ENCODE measurements at regions of chr16 and their contacts with region 1.

Region 1: DNA sequence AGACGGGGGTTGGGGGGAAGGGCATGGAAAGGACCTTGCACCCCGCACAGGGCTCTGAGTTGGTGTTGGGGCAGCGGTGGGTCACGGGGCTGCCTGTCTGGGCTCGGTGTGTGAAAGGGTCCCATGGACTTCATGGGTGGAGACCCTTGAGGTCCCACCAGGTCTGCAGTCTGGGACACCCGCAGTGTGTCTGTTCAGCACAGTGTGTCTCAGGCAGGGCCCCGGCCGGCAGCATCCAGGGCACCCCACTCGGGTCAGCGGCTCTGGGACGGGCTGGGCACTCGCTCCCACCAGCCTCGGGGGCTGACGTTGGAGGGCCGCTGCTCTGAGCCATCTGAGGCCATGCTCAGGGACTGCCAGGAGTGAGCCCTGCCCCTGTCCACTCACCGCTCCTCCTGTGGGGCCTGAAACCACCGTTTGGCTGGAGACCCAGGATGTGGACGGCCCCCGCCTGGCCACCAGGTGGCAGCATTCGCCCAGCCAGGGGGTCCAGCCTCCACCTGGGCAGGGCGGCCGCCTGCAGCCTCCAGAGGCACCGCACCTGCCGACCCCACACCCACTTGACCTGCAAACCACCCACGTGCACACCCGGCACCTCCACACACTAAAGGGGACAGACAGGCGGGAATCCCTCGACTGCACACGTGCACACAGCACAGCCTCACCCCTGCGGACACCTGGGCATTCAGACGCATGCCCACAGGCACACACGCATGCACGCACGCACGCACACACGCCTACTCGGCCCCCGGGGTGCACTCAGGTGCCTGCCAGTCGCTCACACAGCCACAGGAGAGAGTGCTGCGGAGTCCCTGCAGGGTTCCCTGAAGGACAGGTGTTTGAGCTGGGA is 10.1 kb upstream of the ZFPM1 start:
- DNase-seq: peak; percentile 86

Region 2: GRCh38 chr16:88375236-88375975 is 67.5 kb before region 1 on chr16:
- intact Hi-C with region 1: no loop called
- DNase-seq: no peak

Region 3: GRCh38 chr16:88461331-88462269 is 18.6 kb after region 1 on chr16:
- intact Hi-C with region 1: no loop called
- DNase-seq: no peak

Region 4: GRCh38 chr16:88527186-88527936 is 84.4 kb after region 1 on chr16:
- intact Hi-C with region 1: loop called (anchors 1 kb)
- DNase-seq: no peak

Region 5: DNA sequence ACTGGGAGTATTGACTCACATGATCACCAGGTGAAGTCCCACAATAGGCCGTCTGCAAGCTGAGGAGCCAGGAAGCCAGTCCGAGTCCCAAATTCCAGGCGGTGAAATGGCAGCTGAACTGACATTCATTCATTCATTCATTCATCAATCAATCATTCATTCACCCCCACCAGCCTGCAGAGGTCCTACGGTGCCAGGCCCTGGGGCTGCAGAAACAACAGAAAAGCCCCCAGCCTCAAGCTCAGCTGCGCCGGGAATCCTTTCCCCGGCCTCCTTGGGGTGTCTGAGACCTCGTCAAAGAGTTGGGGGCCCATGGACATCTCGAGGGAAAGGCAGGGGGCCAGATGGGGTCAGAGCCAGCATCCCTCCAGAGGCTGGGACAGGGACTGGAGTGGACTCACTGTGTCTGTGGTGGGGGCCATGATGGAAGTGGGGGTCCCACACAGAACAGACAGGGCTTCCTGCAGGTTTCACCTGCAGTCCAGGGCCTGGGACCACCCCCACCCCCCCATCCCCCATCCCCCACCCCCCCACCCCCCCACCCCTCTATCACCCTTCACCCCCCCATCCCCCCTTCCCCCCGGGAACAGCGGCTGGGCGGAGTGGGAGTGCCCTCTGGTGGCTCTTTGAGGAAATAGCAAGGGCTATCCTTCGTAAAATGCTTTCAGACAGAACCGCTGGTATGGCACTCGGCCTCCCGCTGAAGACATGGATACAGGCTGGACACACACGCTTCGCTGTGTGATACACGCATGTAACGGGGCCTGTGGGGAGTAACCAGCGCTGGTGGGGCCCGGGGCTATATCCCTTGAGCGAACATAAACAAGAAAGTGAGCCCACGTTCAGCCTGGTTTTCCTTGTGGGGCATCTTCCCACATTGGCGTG is 118.8 kb after region 1 on chr16:
- intact Hi-C with region 1: loop called (anchors 2 kb)
- DNase-seq: no peak

Measured in cardiac septum (tissue), 1 donor.